BJ (cell line): ENCODE measurements at regions of chr11 and their contacts with region 1.

Region 1: GRCh38 chr11:128172046-128172878 is 415.1 kb downstream of the ETS1 start:
- DNase-seq: peak; percentile 44
- H3K4me3 ChIP-seq: no peak overlapping the region
- H3K27me3 ChIP-seq: no peaks in the 10 kb centered on the region
- CTCF ChIP-seq: peak; percentile 78

Region 2: GRCh38 chr11:128283451-128283850 is 111.2 kb after region 1 on chr11:
- CTCF ChIA-PET with region 1: interaction called, 15 read pairs
- POLR2A ChIA-PET with region 1: no interaction called
- DNase-seq: no peak
- H3K4me3 ChIP-seq: no peak overlapping the region
- H3K27me3 ChIP-seq: no peaks in the 10 kb centered on the region
- CTCF ChIP-seq: no peak

Region 3: DNA sequence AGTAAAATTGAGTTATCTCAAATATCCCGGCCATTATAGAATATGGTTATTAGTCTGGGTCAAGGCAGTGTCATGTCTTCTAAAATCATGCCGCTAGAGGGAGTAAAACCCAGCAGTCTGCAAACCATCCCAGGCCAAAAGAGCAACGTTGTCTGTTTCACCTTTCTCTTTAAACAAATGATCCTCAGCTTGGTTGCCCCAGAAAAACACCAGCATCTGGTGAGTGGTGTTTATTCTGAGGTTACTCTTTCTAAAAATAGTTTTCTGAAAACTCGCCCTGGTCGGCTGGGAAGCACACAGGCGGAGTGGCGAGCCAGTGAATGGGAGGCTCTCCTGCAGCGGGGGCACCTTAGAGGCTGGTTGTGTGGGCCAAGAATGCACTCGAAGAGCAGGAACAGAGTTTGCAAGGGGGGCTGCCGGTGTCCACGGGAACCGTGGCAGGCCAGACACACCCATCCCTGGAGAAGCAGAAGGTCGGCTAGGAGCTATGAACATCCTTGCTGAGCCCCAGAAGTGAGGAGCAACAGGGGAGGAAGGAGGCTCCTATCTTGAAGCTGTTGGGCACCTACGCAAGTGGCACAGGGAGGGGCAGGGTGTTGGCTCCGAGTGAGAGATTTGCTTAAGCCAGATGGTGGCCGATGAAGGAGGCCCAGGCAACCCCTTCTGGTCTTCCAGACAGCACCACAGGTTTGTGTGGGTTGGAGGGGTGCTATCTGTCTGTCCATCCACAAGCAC is 118.0 kb after region 1 on chr11:
- CTCF ChIA-PET with region 1: interaction called, 15 read pairs
- POLR2A ChIA-PET with region 1: no interaction called
- DNase-seq: peak; percentile 67
- H3K4me3 ChIP-seq: no peak overlapping the region
- H3K27me3 ChIP-seq: no peaks in the 10 kb centered on the region
- CTCF ChIP-seq: peak; percentile 75

Region 4: DNA sequence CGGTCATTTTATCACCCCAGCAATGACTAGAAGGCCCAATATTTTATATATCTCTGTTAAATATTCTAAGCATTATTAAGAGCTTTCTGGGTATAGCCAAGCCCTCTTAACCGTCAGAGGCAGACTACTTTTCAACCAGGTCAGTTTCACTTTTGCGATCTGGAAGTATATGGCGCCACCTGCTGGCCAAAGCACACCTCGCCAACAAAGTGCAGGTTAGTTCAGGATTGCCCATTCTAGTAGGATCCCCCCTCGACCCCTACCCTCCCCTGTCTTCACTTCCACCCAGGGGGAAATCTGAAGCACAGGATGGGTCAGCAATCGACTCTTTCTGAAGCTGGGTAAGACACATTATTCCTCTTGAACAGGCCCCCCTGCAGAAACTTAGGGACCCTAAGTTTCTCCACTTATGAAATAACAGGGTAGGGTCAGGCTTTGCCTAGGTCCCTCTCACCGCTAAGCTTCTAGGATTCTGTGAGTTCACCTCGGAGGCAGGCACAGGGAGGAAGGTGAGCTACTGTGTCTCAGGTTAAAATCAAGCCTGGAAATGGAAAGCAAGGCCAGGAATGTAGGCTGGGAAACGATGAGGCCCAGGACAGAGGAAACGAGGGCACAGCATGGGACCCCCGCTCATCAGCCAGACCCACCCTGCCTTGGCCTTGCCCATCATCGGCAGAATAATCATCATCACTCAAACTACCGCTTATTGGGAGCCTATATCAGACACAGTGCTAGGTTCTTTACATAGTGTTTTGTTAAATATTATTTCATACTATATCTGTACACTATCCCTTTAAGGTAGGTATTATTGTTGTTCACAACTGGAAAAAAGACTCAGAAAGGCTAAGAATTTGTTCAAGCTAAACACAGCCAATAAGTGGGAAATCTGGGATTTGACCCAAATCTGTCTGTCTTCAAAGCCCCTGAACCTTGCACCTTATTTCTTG is 659.2 kb after region 1 on chr11:
- CTCF ChIA-PET with region 1: interaction called, 62 read pairs
- POLR2A ChIA-PET with region 1: no interaction called
- DNase-seq: no peak
- H3K4me3 ChIP-seq: no peak overlapping the region
- H3K27me3 ChIP-seq: no peaks in the 10 kb centered on the region; the same call in 1 of the 2 replicates
- CTCF ChIP-seq: peak; percentile 84

Region 5: DNA sequence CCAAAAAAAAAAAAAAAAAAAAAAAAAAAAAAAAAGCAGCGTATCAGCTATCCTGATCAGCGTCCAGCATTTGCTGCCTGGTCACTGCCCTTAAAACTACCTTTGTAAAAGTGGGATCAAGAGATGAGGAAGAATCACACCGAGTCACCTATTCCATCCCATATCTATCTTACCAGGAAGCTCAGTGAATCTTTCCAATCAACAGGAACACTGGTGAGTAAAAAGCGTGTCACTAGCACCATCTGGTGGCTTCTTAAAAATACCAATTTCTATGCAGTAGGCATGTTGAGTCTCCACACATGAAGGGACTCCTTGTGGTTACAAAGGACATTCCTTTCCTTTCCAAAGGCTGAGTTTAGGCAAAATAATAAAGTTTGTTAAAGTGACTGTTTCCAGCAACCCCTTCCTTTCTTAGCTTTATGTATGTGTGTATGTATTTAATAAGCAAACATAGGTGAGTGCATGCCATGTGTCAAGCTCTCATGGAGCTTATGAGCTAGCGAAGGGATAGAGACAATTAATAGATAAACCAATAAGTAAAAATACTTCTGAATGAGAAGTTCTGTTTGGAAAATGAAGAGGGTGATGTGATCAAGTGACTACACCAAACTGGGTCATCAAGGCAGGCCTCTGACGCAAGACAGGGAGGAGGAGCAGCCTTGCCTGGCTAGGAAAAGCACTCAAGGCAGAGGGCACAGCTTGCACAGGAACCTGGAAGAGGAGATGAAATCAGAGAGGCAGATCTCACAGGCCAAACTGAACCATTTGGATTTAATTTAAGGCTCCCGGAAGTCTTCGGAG is 784.3 kb after region 1 on chr11:
- CTCF ChIA-PET with region 1: interaction called, 14 read pairs
- POLR2A ChIA-PET with region 1: no interaction called
- DNase-seq: peak; percentile 26
- H3K4me3 ChIP-seq: no peak overlapping the region
- H3K27me3 ChIP-seq: peaks cover 1% of the 10 kb centered on the region
- CTCF ChIP-seq: peak; percentile 65